ENCODE measurements at regions of chr9 and their contacts with region 1.

Region 1: GRCh38 chr9:86034863-86035734 is 64.3 kb downstream of the GOLM1 start:
- DNase-seq: peak; percentile 71
- H3K4me3 ChIP-seq: no peak overlapping the region
- H3K27ac ChIP-seq: no peak overlapping the region
- H3K4me1 ChIP-seq: no peaks in the 10 kb centered on the region
- H3K27me3 ChIP-seq: no peaks in the 10 kb centered on the region
- CTCF ChIP-seq: peak; percentile 82

Region 2: DNA sequence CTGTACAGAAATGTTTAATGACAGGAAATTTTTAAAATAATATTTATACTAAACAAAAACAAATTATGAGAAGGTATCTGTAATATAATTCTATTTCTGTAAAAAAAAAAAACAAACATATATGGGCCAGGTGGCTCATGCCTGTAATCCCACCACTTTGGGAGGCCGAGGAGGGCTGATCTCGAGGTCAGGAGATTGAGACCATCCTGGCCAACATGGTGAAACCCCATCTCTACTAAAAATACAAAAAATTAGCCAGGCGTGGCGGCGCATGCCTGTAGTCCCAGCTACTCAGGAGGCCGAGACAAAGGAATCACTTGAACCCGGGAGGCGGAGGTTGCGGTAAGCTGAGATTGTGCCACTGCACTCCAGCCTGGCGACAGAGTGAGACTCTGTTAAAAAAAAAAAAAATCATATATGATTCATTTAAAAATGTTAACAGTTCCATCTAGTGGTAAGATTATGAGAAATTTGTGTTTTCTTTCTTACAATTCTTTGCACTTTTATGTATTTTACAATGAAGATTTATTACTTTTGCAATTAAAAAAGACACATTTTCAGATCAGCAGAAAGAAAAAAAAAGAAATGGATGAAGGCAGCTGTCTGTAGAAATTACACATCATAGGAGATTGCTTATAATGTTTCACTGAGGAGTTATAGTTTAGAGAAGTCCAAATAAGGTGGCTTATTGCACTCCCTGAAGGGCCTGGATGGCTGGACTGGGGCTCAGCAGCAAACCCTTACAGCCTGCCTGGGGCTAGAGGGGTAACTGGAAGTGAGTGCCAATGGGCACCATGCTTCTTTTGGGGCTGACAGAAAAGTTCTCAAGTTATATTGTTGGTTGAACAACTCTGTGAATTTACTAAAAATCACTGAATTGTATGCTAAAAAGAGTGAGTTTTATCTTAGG is 204.0 kb after region 1 on chr9:
- CTCF ChIA-PET with region 1: no interaction called
- POLR2A ChIA-PET with region 1: no interaction called
- intact Hi-C with region 1: loop called (anchors 10 kb)
- DNase-seq: no peak
- H3K4me3 ChIP-seq: no peak overlapping the region
- H3K27ac ChIP-seq: no peak overlapping the region
- H3K4me1 ChIP-seq: peaks cover 3% of the 10 kb centered on the region
- H3K27me3 ChIP-seq: no peaks in the 10 kb centered on the region
- CTCF ChIP-seq: peak; percentile 19; the same call in 1 of the 2 replicates